Activated CD4-positive, alpha-beta memory T cell treated with anti-CD3 and anti-CD28 coated beads for 36 hours (primary cell): ENCODE measurements at regions of chr5 and their contacts with region 1.

Region 1: GRCh38 chr5:39202597-39203274 is 16.6 kb downstream of the FYB1 start:
- DNase-seq: no peak
- H3K4me3 Mint-ChIP-seq: peak overlapping the region; percentile 88
- H3K27ac Mint-ChIP-seq: peak overlapping the region; percentile 95
- H3K4me1 Mint-ChIP-seq: peaks cover 39% of the 10 kb centered on the region
- H3K27me3 Mint-ChIP-seq: no peaks in the 10 kb centered on the region

Region 2: DNA sequence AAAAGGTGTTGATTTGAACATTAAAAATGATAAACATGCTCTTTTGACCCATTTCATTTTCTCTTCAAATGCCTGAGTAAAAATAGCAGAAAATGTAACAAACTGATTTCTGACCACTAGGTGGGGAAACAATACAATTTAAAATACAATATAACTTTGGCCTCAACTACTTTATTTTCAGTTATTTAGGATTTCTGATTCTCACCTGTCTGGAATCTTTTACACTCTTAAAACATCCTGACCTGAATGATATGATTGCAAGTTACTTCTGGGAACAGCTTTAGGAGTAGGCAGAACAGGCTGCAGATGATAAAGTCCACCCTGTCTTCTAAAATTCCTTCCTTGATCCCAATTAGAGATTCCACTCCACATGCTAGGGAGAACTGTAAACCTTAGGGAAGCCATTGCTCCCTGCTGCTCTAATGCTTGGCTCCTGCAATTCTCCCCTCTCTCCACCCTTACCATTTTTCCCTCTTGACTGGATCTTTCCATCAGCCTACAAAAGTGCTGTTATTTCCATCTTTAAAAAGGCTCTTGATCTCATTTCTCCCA is 53.7 kb before region 1 on chr5:
- CTCF ChIA-PET with region 1: interaction called, 15 read pairs
- POLR2A ChIA-PET with region 1: interaction called, 8 read pairs
- intact Hi-C with region 1: no loop called
- DNase-seq: no peak
- H3K4me3 Mint-ChIP-seq: no peak overlapping the region
- H3K27ac Mint-ChIP-seq: peak overlapping the region; percentile 90
- H3K4me1 Mint-ChIP-seq: peaks cover 61% of the 10 kb centered on the region
- H3K27me3 Mint-ChIP-seq: no peaks in the 10 kb centered on the region

Region 3: GRCh38 chr5:39158127-39158593 is 44.6 kb before region 1 on chr5:
- CTCF ChIA-PET with region 1: interaction called, 12 read pairs
- POLR2A ChIA-PET with region 1: interaction called, 8 read pairs
- intact Hi-C with region 1: no loop called
- DNase-seq: peak; percentile 56
- H3K4me3 Mint-ChIP-seq: peak overlapping the region; percentile 71
- H3K27ac Mint-ChIP-seq: peak overlapping the region; percentile 90
- H3K4me1 Mint-ChIP-seq: peaks cover 69% of the 10 kb centered on the region
- H3K27me3 Mint-ChIP-seq: no peaks in the 10 kb centered on the region

Region 4: DNA sequence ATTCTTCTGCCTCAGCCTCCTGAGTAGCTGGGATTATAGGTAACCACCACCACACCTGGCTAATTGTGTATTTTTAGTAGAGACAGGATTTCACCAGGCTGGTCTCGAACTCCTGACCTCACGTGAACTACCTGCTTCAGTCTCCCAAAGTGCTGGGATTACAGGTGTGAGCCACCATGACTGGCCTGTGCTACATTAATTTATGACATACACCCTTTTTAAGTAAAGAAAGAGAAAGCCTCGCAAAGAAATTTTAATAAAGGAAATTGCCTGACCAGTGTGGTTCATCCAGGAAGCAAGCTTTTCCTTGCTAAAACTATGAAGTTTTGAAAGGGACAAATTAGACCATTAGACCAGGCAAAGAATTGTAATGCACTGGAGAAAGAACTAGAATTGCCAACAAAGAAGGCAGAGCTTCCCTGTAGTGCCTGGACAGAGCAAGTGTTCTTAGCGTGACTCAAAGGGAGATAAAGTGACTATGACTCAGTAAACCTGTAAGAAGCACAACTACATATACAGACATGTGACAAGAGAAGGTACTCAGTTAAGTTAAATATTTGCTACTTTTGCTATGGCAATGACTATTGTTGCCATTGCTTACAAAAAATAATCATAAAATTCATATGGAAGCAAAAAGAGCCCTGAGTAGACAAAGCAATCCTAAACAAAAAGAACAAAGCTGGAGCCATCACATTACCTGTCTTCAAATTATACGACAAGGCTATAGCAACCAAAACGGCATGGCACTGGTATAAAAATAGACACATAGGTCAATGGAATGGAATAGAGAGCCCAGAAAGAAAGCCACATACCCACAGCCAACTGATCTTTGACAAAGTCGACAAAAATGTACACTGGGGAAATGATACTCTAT is 38.0 kb before region 1 on chr5:
- CTCF ChIA-PET with region 1: interaction called, 3 read pairs
- POLR2A ChIA-PET with region 1: interaction called, 6 read pairs
- intact Hi-C with region 1: loop called (anchors 1 kb)
- DNase-seq: peak; percentile 42
- H3K4me3 Mint-ChIP-seq: peak overlapping the region; percentile 75
- H3K27ac Mint-ChIP-seq: peak overlapping the region; percentile 96
- H3K4me1 Mint-ChIP-seq: peaks cover 80% of the 10 kb centered on the region
- H3K27me3 Mint-ChIP-seq: no peaks in the 10 kb centered on the region

Region 5: DNA sequence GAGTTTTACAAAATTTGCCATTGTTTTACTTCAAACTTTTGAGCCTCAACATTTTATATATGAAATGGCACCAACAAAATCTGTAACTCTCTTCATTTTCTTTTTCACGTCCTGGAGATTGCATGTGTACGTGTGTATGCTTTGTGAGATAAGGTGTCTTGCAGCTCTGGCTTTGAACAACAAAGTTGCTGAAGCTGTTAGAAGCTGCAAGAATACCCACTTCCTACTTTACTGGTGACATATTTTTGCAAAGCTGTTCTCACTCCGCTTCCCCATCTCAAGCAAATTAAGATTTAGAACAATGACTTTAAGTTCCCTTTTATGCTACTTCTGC is 25.1 kb before region 1 on chr5:
- CTCF ChIA-PET with region 1: interaction called, 25 read pairs
- POLR2A ChIA-PET with region 1: interaction called, 50 read pairs
- intact Hi-C with region 1: loop called (anchors 1 kb)
- DNase-seq: no peak
- H3K4me3 Mint-ChIP-seq: peak overlapping the region; percentile 63
- H3K27ac Mint-ChIP-seq: peak overlapping the region; percentile 88
- H3K4me1 Mint-ChIP-seq: peaks cover 97% of the 10 kb centered on the region
- H3K27me3 Mint-ChIP-seq: no peaks in the 10 kb centered on the region

Region 6: GRCh38 chr5:39187831-39188731 is 14.7 kb before region 1 on chr5:
- CTCF ChIA-PET with region 1: interaction called, 25 read pairs
- POLR2A ChIA-PET with region 1: interaction called, 91 read pairs
- intact Hi-C with region 1: loop called (anchors 1 kb)
- DNase-seq: no peak
- H3K4me3 Mint-ChIP-seq: peak overlapping the region; percentile 69
- H3K27ac Mint-ChIP-seq: peak overlapping the region; percentile 92
- H3K4me1 Mint-ChIP-seq: peaks cover 79% of the 10 kb centered on the region
- H3K27me3 Mint-ChIP-seq: no peaks in the 10 kb centered on the region

Region 7: GRCh38 chr5:39238366-39239105 is 35.8 kb after region 1 on chr5:
- CTCF ChIA-PET with region 1: no interaction called
- POLR2A ChIA-PET with region 1: no interaction called
- intact Hi-C with region 1: no loop called
- DNase-seq: no peak
- H3K4me3 Mint-ChIP-seq: no peak overlapping the region
- H3K27ac Mint-ChIP-seq: no peak overlapping the region
- H3K4me1 Mint-ChIP-seq: peaks cover 8% of the 10 kb centered on the region
- H3K27me3 Mint-ChIP-seq: no peaks in the 10 kb centered on the region